Transverse colon (tissue), 4 donors: ENCODE measurements at regions of chr4 and their contacts with region 1.

Region 1: DNA sequence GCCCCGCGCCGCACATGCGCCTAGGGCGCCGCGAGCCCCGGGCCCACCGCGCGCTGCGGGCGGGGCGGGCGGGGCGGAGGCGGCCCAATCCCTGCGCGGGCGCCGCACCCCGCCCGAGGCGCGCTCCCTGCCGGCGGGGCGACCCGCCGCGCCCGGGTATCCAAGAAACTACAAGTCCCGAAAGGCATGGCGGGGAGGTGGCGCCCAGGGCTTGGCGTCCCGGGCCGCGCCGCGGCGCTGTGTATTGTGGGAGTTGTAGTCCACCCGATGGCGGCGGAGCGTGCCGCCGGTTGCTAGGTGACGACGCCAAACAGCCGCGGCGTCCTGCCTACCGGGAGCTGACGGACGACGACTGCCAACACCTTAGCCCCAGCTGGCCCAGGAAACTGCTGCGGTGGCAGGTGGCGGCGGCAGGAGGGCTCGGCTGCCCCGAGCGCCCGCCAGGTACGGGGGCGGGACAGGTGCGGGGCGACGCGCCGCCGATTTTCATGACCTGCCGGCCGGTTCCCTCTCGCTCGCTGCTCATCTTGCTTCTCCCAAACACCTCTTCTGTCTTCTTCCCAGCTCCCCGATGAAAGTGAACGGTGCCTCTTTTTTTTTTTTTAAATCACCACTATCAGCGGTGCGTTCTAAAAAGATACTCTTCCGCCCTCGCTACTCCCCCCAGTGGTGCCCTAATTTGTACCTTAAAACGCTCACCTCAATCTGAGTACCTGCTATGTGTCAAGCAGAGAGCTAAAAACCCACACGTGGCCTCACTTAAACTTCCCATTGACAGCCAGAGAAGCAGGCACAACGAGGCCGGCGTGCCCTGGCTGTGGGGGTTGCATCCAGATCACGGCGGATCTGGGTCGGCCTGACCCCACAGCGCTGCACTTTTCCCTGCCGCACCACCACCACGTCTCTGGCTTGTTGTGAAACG is at the start of gene CFAP99:
- DNase-seq: peak; percentile 99
- H3K4me3 ChIP-seq: peak within 1 kb of the TSS; percentile 64 to 74 (median 67)
- H3K27ac ChIP-seq: peak within 1 kb of the TSS; percentile 66 to 83 (median 76)
- H3K4me1 ChIP-seq: peaks cover 12 to 43% (median 32%) of the 10 kb centered on the region in 4 donors
- H3K27me3 ChIP-seq: peaks cover 52% of the 10 kb centered on the region
- CTCF ChIP-seq: peak in 1 of 5 experiments; percentile 28
- EP300 ChIP-seq: no peak
- POLR2A ChIP-seq: no peak
- total RNA-seq, gene CFAP99: 0.32 to 0.82 (median 0.60) TPM in 3 of 4 donors, not detected in the other

Region 2: DNA sequence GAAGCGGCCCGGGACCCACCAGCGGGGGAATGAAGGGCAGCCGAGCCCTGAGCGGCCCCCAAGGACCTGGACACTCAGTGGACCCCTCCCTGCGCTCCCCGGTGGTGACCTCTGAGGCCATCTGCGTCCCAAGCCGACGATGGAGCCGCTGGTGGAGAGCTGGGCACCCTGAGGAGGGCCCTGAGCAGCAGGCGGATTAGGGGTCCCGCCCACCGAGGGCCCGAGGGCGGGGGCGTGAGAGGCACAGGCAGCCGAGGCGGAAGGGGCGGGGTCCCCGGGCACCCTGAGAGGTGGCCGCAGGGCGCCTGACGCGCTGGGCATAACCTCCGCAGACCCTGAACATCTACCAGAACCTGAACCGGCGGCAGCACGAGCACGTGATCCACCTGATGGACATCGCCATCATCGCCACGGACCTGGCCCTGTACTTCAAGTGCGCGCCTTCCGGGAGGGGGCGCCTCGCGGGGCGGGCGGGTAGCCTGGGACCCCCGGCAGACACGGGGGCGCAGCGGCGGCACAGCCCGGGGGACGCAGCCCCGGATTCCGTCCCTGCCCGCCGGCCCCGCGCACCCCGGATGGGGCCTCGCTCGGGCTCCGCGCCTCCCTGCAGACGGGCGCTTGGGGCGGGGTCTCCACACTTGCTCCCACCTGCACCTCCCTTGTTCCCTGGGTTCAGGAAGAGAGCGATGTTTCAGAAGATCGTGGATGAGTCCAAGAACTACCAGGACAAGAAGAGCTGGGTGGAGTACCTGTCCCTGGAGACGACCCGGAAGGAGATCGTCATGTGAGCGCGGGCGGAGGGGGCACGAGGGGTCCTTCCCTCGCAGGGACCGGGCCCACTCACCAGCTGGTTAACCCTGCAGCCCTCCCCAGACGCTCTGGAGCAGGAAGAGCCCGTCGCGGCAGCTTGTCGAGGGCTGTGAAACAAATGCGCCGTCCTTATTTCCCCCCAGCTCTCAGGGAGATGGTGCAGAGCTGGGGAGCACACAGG is 1755.2 kb before region 1 on chr4:
- in situ Hi-C with region 1: no loop called
- intact Hi-C with region 1: no loop called
- DNase-seq: peak; percentile 71
- H3K4me3 ChIP-seq: peak overlapping the region; percentile 34 to 55 (median 47)
- H3K27ac ChIP-seq: peak overlapping the region; percentile 12 to 44 (median 32)
- H3K4me1 ChIP-seq: peaks cover 0 to 10% (median 6%) of the 10 kb centered on the region in 4 donors
- H3K27me3 ChIP-seq: peaks cover 6% of the 10 kb centered on the region
- CTCF ChIP-seq: no peak
- EP300 ChIP-seq: no peak
- POLR2A ChIP-seq: no peak

Region 3: DNA sequence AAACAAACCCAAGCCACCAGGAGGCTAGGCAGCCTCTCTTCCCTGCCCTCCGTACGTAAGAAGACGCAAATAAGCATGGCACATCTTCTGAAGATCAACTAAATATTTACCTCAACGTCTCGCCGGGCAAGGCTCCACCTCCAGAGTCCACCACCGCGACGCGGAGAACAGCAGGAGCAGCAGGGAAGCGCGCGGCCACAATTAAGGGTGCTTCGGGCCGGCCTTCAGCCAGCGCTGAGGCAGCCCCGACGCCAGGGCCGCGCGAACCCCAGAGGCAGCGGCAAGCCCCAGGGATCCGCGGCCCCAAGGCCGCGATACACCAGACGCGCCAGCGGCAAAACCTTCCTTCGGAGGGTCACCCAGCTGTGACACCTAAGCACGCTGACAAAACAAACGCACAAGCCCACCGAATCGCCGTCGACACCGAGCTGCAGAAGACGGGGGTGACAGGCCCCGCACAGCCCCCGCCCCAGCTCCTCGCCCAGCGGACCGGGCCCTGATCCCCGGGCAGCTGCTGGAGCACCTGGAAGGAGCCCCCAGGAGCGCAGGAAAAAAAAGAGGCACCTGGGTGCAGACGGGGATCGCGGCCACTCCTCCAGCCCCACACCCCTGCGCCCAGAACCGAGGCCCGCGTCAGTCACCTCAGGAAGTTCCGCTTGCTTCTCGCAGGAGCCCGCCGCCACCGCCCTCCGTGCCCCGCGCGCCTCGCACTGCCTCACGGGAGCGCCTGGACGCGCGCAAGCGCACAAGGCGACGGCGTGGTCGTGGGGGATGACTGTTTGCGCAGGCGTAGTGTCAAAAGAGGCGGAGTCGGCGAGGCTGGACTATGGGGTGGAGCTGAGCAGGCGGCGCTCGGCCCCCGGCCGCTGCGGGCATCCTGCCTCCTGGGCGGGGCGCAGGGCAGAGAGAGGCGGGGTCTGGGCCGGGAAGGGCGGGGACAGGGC is 177.2 kb before region 1 on chr4 and contains the starts of genes HAUS3 and POLN:
- in situ Hi-C with region 1: loop called in 1 of 4 experiments (anchors 25 kb)
- intact Hi-C with region 1: no loop called
- DNase-seq: peak; percentile 99
- H3K4me3 ChIP-seq: peak within 1 kb of the TSS; percentile 74 to 99 (median 94)
- H3K27ac ChIP-seq: peak within 1 kb of the TSS; percentile 90 to 97 (median 94)
- H3K4me1 ChIP-seq: peaks cover 28 to 71% (median 52%) of the 10 kb centered on the region in 4 donors
- H3K27me3 ChIP-seq: no peaks in the 10 kb centered on the region
- CTCF ChIP-seq: peak in 3 of 5 experiments; percentile 9 to 25 (median 10)
- EP300 ChIP-seq: no peak
- POLR2A ChIP-seq: peak; percentile 89
- total RNA-seq, gene HAUS3: 2.0 to 18.0 (median 11.3) TPM
- total RNA-seq, gene POLN: 0.27 to 2.6 (median 1.4) TPM

Region 4: GRCh38 chr4:2560167-2560566 is 141.3 kb after region 1 on chr4:
- in situ Hi-C with region 1: no loop called
- intact Hi-C with region 1: no loop called
- DNase-seq: no peak
- H3K4me3 ChIP-seq: no peak overlapping the region
- H3K27ac ChIP-seq: no peak overlapping the region
- H3K4me1 ChIP-seq: no peaks in the 10 kb centered on the region
- H3K27me3 ChIP-seq: no peaks in the 10 kb centered on the region
- CTCF ChIP-seq: no peak
- EP300 ChIP-seq: no peak
- POLR2A ChIP-seq: no peak